ENCODE measurements at regions of chrX and their contacts with region 1.

Region 1: GRCh38 chrX:41384041-41384705 is 50.2 kb downstream of the DDX3X start:
- DNase-seq: peak; percentile 22
- H3K4me3 Mint-ChIP-seq: peak overlapping the region; percentile 47
- H3K27ac Mint-ChIP-seq: peak overlapping the region; percentile 97
- H3K4me1 Mint-ChIP-seq: peaks cover 16% of the 10 kb centered on the region
- H3K27me3 Mint-ChIP-seq: no peaks in the 10 kb centered on the region

Region 2: DNA sequence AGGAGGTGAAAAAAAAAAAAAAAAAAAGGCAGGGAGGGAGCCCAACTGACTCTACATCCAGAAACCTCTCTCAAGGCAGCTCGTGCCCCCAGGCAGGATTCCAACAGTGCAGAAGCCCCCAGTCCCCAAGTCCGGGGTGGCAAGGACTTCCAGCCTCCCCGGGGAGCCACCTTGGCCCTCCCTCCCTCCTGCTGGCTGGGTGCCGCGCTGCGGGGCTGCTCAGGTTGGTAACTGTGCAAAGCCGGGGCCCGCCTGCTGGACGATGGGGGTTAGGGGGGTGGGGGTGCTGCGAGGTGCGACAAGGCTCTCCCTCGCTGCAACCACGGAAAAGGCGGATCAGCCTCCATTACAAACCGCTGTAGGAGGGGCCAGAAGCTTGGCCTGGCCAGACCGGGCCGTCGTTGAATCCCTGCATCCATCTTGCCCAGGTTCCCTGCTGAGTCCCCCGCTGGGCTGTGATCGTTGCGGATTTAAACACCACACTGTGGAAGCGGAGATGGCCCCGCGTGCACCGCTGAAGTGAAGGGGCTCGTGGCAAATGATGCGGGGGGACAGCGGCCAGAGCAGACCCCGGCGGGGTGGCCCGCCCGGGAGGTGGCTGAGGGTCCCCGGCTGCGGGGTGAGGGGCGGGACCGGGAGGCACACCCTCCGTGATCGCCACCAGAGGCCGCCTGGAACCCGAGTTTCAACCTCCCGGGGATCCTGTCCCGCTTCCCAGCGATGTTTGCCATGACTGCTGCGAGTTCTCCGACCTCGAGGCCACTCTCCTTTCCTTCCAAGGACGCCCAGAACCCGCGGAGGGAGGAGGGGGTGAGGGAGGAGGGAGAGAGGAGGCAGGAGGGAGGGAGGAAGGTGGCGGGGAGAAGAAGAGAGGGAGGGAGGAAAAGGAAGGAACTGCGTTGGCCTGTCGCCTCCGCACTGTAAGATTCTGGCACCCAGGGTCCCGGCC is 108.2 kb before region 1 on chrX:
- intact Hi-C with region 1: loop called (anchors 5 kb)
- DNase-seq: peak; percentile 16
- H3K4me3 Mint-ChIP-seq: peak overlapping the region; percentile 77
- H3K27ac Mint-ChIP-seq: peak overlapping the region; percentile 90
- H3K4me1 Mint-ChIP-seq: peaks cover 8% of the 10 kb centered on the region
- H3K27me3 Mint-ChIP-seq: no peaks in the 10 kb centered on the region

Region 3: GRCh38 chrX:41350976-41351569 is 33.1 kb before region 1 on chrX:
- intact Hi-C with region 1: loop called (anchors 2 kb)
- DNase-seq: no peak
- H3K4me3 Mint-ChIP-seq: no peak overlapping the region
- H3K27ac Mint-ChIP-seq: peak overlapping the region; percentile 53
- H3K4me1 Mint-ChIP-seq: peaks cover 36% of the 10 kb centered on the region
- H3K27me3 Mint-ChIP-seq: no peaks in the 10 kb centered on the region

Region 4: GRCh38 chrX:41512394-41512793 is 128.2 kb after region 1 on chrX:
- intact Hi-C with region 1: loop called (anchors 10 kb)
- DNase-seq: peak; percentile 32
- H3K4me3 Mint-ChIP-seq: peak overlapping the region; percentile 16
- H3K27ac Mint-ChIP-seq: peak overlapping the region; percentile 88
- H3K4me1 Mint-ChIP-seq: peaks cover 40% of the 10 kb centered on the region
- H3K27me3 Mint-ChIP-seq: no peaks in the 10 kb centered on the region

Measured in activated T-helper 1 cell treated with anti-CD3 and anti-CD28 coated beads, Interleukin-12 subunit alpha, Interleukin-12 subunit beta, Interleukin-2, Interleukin-4 antibody, amounts not matched to agents 30 ng/mL and 10 ng/mL and 1 ng/mL, durations not matched to agents 14 hours and 24 hours and 36 hours (primary cell).